ENCODE measurements at regions of chr16 and their contacts with region 1.

Region 1: DNA sequence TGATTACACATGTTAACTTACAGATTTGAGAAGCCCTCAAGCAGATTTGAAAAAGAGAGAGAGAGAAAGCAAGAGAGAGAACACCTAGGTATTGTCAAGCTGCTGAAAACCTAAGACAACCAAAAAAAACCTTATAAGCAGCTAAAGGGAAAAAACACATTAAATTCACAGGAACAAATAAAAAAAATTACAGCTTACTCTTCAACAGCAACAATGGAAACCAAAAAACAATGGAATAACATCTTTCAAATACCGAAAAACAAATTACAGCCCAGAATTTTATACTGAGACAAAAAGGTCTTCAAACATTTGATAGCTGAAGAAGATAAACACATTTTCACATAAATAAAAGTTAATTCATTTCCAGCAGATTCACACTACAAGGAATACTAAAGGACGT is 8.4 kb upstream of the CFAP20 start:
- DNase-seq: no peak
- ATAC-seq: no peak
- H3K4me3 ChIP-seq: no peak overlapping the region
- H3K27ac ChIP-seq: no peak overlapping the region
- H3K4me1 ChIP-seq: no peaks in the 10 kb centered on the region
- H3K27me3 ChIP-seq: no peaks in the 10 kb centered on the region

Region 2: GRCh38 chr16:58011652-58012051 is 125.9 kb before region 1 on chr16:
- intact Hi-C with region 1: no loop called
- DNase-seq: no peak
- ATAC-seq: no peak
- H3K4me3 ChIP-seq: no peak overlapping the region
- H3K27ac ChIP-seq: no peak overlapping the region
- H3K4me1 ChIP-seq: peaks cover 2% of the 10 kb centered on the region
- H3K27me3 ChIP-seq: no peaks in the 10 kb centered on the region

Region 3: DNA sequence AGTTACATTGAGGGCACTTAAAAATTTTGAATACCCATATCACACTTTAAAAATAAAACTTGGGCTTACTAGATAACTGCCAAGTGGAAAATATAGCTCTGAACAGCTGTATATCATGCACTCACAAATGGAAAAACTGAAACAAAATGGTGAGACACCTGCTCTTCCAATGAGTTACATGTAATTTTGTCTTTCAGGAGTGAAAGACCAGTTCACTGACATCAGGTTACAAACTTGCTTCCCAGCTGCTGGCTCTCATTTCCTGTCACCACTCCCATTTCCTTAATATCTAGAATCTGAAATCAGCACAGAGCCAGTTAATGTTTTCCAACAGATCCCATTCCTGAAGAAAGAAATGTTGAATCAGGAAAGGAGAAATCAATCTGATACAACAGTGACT is 49.5 kb after region 1 on chr16:
- intact Hi-C with region 1: loop called in 1 of 4 experiments (anchors 10 kb)
- DNase-seq: no peak
- ATAC-seq: peak in 1 of 2 donors; percentile 48
- H3K4me3 ChIP-seq: no peak overlapping the region
- H3K27ac ChIP-seq: no peak overlapping the region
- H3K4me1 ChIP-seq: no peaks in the 10 kb centered on the region
- H3K27me3 ChIP-seq: no peaks in the 10 kb centered on the region

Region 4: GRCh38 chr16:58409316-58409973 is 271.9 kb after region 1 on chr16:
- intact Hi-C with region 1: no loop called
- DNase-seq: peak; percentile 77 to 86 (median 82)
- ATAC-seq: peak; percentile 80 to 95
- H3K4me3 ChIP-seq: no peak overlapping the region
- H3K27ac ChIP-seq: peak overlapping the region; percentile 85
- H3K4me1 ChIP-seq: peaks cover 4% of the 10 kb centered on the region
- H3K27me3 ChIP-seq: no peaks in the 10 kb centered on the region

Measured in right cardiac atrium (tissue), 5 donors.